ENCODE measurements at regions of chr21 and their contacts with region 1.

Region 1: DNA sequence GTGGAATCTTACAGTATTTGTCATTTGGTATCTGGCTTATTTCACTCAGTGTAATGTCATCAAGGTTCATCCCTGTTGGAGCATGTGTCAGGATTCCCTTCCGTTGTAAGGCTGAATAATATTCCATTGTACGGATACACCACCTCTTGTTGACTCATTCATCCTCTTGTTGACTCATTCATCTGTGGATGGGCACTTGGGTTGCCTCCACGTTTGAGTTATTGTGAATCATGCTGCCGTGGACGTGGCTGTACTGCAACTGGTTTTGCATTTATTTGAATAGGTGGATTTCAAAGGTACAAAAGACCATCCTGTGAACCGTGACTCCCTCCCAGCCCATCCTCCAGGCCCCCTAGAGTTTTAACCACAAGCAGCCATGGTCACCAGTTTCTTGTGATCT is 11.9 kb upstream of the TCP10L start:
- DNase-seq: peak; percentile 78
- H3K4me3 Mint-ChIP-seq: no peak overlapping the region
- H3K27ac Mint-ChIP-seq: peak overlapping the region; percentile 44
- H3K4me1 Mint-ChIP-seq: peaks cover 13% of the 10 kb centered on the region
- H3K27me3 Mint-ChIP-seq: no peaks in the 10 kb centered on the region
- CTCF ChIP-seq: no peak

Region 2: GRCh38 chr21:32392880-32393676 is 204.1 kb before region 1 on chr21 and contains the start of gene URB1:
- CTCF ChIA-PET with region 1: interaction called, 15 read pairs
- POLR2A ChIA-PET with region 1: interaction called, 6 read pairs
- intact Hi-C with region 1: no loop called
- DNase-seq: peak; percentile 86
- H3K4me3 Mint-ChIP-seq: peak within 1 kb of the TSS; percentile 81
- H3K27ac Mint-ChIP-seq: peak within 1 kb of the TSS; percentile 84
- H3K4me1 Mint-ChIP-seq: peaks cover 31% of the 10 kb centered on the region
- H3K27me3 Mint-ChIP-seq: no peaks in the 10 kb centered on the region
- CTCF ChIP-seq: no peak
- total RNA-seq, gene URB1: 32.3 and 43.5 TPM in 2 replicates

Region 3: GRCh38 chr21:32403201-32403777 is 193.9 kb before region 1 on chr21:
- CTCF ChIA-PET with region 1: interaction called, 71 read pairs
- POLR2A ChIA-PET with region 1: interaction called, 4 read pairs
- intact Hi-C with region 1: loop called (anchors 1 kb)
- DNase-seq: peak; percentile 81
- H3K4me3 Mint-ChIP-seq: no peak overlapping the region
- H3K27ac Mint-ChIP-seq: no peak overlapping the region
- H3K4me1 Mint-ChIP-seq: no peaks in the 10 kb centered on the region
- H3K27me3 Mint-ChIP-seq: peaks cover 12% of the 10 kb centered on the region
- CTCF ChIP-seq: peak; percentile 66

Region 4: DNA sequence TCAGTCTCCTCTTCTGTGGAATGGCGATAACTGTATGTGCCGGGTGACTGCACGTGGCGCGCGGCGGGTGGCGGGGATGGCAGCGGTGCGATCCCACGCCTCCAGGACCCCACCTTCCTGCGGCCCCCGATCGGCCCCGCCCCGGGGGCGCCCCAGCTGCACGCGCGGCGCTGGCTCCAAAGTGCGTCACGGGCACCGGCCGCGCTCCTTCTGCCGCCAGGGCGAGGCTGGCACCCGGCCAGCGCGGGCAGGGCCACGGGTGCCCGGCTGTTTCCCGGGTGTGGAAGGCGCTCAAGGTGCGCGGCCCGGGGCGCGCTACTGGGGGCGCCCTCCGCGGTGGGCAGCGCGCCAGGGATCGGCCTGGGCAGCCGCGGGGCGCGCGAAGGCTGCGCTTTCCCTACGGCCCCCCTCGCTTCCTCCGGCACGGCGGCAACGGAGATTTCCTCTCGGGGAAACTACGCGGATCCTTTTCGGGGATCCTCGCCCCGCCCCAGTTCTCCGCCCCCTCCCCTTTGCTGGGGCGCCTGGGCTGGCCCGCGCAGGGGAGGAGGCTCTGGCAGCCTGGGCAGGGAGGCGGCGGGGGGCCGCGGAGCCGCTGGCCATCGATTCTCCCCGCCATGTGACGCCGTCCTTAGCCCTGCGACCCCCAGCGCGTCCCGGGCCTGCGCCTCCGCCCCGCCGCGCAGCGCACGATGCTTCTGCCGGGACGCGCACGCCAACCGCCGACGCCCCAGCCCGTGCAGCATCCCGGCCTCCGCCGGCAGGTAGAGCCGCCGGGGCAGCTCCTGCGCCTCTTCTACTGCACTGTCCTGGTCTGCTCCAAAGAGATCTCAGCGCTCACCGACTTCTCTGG is 184.8 kb before region 1 on chr21 and contains the start of gene EVA1C:
- CTCF ChIA-PET with region 1: interaction called, 22 read pairs
- POLR2A ChIA-PET with region 1: interaction called, 8 read pairs
- intact Hi-C with region 1: loop called (anchors 1 kb)
- DNase-seq: peak; percentile 72
- H3K4me3 Mint-ChIP-seq: peak within 1 kb of the TSS; percentile 97
- H3K27ac Mint-ChIP-seq: peak within 1 kb of the TSS; percentile 87
- H3K4me1 Mint-ChIP-seq: peaks cover 44% of the 10 kb centered on the region
- H3K27me3 Mint-ChIP-seq: no peaks in the 10 kb centered on the region
- CTCF ChIP-seq: no peak
- total RNA-seq, gene EVA1C: 16.8 and 22.2 TPM in 2 replicates

Region 5: GRCh38 chr21:32545948-32546441 is 51.2 kb before region 1 on chr21:
- CTCF ChIA-PET with region 1: no interaction called
- POLR2A ChIA-PET with region 1: no interaction called
- intact Hi-C with region 1: no loop called
- DNase-seq: no peak
- H3K4me3 Mint-ChIP-seq: no peak overlapping the region
- H3K27ac Mint-ChIP-seq: no peak overlapping the region
- H3K4me1 Mint-ChIP-seq: no peaks in the 10 kb centered on the region
- H3K27me3 Mint-ChIP-seq: peaks cover 16% of the 10 kb centered on the region
- CTCF ChIP-seq: no peak

Region 6: GRCh38 chr21:32587120-32587519 is 10.1 kb before region 1 on chr21:
- CTCF ChIA-PET with region 1: interaction called, 36 read pairs
- POLR2A ChIA-PET with region 1: interaction called, 3 read pairs
- intact Hi-C with region 1: no loop called
- DNase-seq: no peak
- H3K4me3 Mint-ChIP-seq: no peak overlapping the region
- H3K27ac Mint-ChIP-seq: no peak overlapping the region
- H3K4me1 Mint-ChIP-seq: no peaks in the 10 kb centered on the region
- H3K27me3 Mint-ChIP-seq: no peaks in the 10 kb centered on the region
- CTCF ChIP-seq: no peak